ENCODE measurements at regions of chr14 and their contacts with region 1.

Region 1: GRCh38 chr14:53545217-53545616 is 392.1 kb upstream of the DDHD1 start:
- DNase-seq: no peak
- H3K4me3 Mint-ChIP-seq: no peak overlapping the region
- H3K27ac Mint-ChIP-seq: no peak overlapping the region
- H3K4me1 Mint-ChIP-seq: no peaks in the 10 kb centered on the region
- H3K27me3 Mint-ChIP-seq: no peaks in the 10 kb centered on the region

Region 2: DNA sequence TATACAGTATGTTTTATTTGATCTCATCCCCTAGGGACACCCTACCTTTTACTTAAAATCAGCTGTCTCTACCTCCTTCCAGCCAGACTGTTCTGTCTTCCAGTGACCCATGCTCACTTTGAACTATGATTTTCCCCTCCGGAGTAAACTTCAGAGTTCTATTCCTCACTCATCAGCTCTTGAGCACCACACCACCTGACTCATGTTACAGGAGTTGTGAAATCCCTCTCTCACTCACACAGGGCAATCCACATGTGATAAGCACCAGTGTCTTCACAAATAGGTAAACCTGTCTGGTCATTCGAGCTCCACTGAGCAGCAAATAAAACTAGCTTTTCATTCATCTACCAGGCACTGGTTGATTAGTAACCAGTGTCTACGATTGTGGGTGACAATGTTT is 588.7 kb after region 1 on chr14:
- intact Hi-C with region 1: loop called (anchors 5 kb)
- DNase-seq: no peak
- H3K4me3 Mint-ChIP-seq: no peak overlapping the region
- H3K27ac Mint-ChIP-seq: no peak overlapping the region
- H3K4me1 Mint-ChIP-seq: no peaks in the 10 kb centered on the region
- H3K27me3 Mint-ChIP-seq: no peaks in the 10 kb centered on the region

Measured in activated T-helper 1 cell treated with anti-CD3 and anti-CD28 coated beads, Interleukin-12 subunit alpha, Interleukin-12 subunit beta, Interleukin-2, Interleukin-4 antibody, amounts not matched to agents 30 ng/mL and 10 ng/mL and 1 ng/mL, durations not matched to agents 14 hours and 24 hours and 36 hours (primary cell).